ENCODE measurements at regions of chr1 and their contacts with region 1.

Region 1: DNA sequence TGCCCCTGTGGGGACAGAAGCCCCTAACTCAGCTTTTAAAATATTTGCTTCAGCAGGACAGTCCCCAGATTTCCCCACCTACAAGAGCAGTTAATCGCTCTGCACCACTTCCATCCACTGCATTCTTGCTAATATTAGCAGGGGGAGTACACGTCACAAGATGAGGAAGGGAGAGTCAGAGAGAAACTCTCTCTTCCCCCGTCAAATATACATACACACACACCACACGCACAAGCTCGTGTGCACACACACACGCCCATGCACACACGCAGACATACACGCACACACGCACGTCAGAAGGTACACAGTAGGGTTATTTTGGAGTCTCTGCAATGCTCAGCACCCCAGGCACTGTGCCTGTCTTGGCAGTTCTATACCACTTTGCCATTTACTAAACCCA is 2.1 kb downstream of the CLCA1 start:
- DNase-seq: no peak
- ATAC-seq: no peak

Region 2: DNA sequence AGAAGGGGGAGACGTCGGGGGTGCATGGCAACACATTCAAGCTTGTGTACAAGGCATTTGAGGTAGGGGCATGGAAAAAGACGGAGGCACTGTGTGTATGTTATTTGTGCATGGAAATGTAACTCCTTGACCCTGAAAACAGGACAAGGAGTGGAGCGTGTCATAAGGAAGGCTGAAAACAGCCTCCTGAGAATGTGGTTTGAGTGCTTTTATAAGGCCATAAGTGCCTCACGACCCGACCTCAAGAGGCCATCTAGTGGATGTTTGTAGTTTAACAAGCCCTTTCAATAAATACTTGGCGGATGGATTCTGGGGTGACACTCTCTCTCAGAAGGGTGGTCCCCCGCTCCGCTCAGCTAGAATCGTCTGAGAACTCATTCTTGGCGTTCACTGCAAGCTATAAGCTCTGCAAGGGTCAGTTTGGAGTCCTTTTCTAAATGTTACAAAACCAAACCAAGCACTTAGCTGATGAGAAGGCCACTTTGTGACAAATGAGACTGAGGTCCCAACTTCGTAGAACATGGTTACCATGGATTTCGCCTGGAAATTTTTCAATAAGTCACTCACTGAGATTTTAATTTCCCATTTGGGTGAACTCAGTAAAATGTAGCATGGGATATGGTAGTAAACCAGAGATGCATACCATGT is 37.2 kb after region 1 on chr1:
- intact Hi-C with region 1: loop called in 1 of 2 experiments (anchors 5 kb)
- DNase-seq: peak; percentile 24
- ATAC-seq: no peak

Region 3: GRCh38 chr1:86522240-86522639 is 51.4 kb after region 1 on chr1:
- intact Hi-C with region 1: no loop called
- DNase-seq: no peak
- ATAC-seq: no peak

Region 4: GRCh38 chr1:87084244-87084836 is 613.5 kb after region 1 on chr1:
- intact Hi-C with region 1: loop called (anchors 10 kb)
- DNase-seq: no peak
- ATAC-seq: peak in 1 of 2 donors; percentile 27

Region 5: GRCh38 chr1:88009916-88010315 is 1539.1 kb after region 1 on chr1:
- intact Hi-C with region 1: no loop called
- DNase-seq: no peak
- ATAC-seq: no peak

Measured in left cardiac atrium (tissue), 4 donors.